Naive thymus-derived CD4-positive, alpha-beta T cell (primary cell): ENCODE measurements at regions of chr2 and their contacts with region 1.

Region 1: GRCh38 chr2:172484253-172484652 is 56.9 kb downstream of the ITGA6 start:
- DNase-seq: peak in 7 of 9 donors; percentile 46 to 68 (median 61)
- ATAC-seq: peak; percentile 66
- H3K4me3 ChIP-seq: no peak overlapping the region
- H3K4me3 Mint-ChIP-seq: peak overlapping the region in 8 of 10 donors; percentile 1 to 81 (median 41)
- H3K27ac ChIP-seq: peak overlapping the region; percentile 16
- H3K27ac Mint-ChIP-seq: peak overlapping the region in 8 of 9 donors; percentile 76 to 94 (median 84)
- H3K4me1 ChIP-seq: peaks cover 0 to 58% of the 10 kb centered on the region in 2 donors
- H3K4me1 Mint-ChIP-seq: peaks cover 27 to 92% (median 77%) of the 10 kb centered on the region in 7 donors
- H3K27me3 ChIP-seq: no peaks in the 10 kb centered on the region
- H3K27me3 Mint-ChIP-seq: no peaks in the 10 kb centered on the region

Region 2: DNA sequence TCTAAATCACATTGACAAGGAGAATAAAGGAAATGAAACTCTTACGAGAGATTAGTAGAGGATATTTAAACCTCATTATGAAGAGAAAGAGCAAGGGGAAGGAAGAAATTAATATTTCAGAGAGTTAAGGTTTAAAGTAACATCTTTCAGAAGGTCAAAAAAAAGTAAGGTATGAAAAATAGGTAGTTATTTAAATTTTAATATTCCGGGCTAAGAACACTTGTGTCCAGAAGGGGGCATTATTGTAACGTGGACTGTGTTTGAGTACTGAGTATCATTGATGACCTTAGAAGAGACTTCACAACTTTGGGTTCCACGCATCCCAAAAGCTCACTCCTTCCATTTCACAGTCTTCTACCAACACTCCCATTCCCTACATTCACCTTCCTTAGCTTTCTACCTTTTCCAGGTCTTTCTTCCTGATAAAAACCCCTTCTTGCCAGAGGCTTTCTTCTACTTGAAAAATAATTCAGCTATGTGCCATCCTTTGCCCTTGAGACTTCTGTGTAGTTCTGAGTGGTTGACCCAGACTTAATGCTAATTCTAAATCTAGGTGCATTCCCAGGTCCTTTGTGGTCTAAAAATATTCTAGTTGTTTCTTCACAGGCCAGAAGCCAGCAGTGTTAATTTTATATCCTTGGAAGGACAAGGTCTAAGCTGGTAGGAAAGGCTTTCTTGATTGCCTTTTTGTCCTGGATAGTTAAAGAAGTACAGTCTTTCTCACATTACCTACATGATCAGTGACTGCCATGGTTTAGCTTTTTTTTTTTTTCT is 780.5 kb before region 1 on chr2:
- CTCF ChIA-PET with region 1: no interaction called
- POLR2A ChIA-PET with region 1: no interaction called
- intact Hi-C with region 1: loop called in 1 of 2 experiments (anchors 1 kb)
- DNase-seq: peak in 5 of 9 donors; percentile 10 to 35 (median 22)
- ATAC-seq: peak; percentile 61
- H3K4me3 ChIP-seq: no peak overlapping the region
- H3K4me3 Mint-ChIP-seq: no peak overlapping the region
- H3K27ac ChIP-seq: no peak overlapping the region
- H3K27ac Mint-ChIP-seq: peak overlapping the region in 6 of 9 donors; percentile 43 to 79 (median 66)
- H3K4me1 ChIP-seq: no peaks in the 10 kb centered on the region
- H3K4me1 Mint-ChIP-seq: peaks cover 2 to 34% (median 11%) of the 10 kb centered on the region in 7 donors
- H3K27me3 ChIP-seq: no peaks in the 10 kb centered on the region
- H3K27me3 Mint-ChIP-seq: no peaks in the 10 kb centered on the region

Region 3: GRCh38 chr2:172120118-172120517 is 364.1 kb before region 1 on chr2:
- CTCF ChIA-PET with region 1: no interaction called
- POLR2A ChIA-PET with region 1: no interaction called
- intact Hi-C with region 1: no loop called
- DNase-seq: no peak
- ATAC-seq: no peak
- H3K4me3 ChIP-seq: no peak overlapping the region
- H3K4me3 Mint-ChIP-seq: no peak overlapping the region
- H3K27ac ChIP-seq: no peak overlapping the region
- H3K27ac Mint-ChIP-seq: no peak overlapping the region
- H3K4me1 ChIP-seq: no peaks in the 10 kb centered on the region
- H3K4me1 Mint-ChIP-seq: no peaks in the 10 kb centered on the region
- H3K27me3 ChIP-seq: no peaks in the 10 kb centered on the region
- H3K27me3 Mint-ChIP-seq: peaks cover 6 to 26% (median 20%) of the 10 kb centered on the region in 5 donors

Region 4: GRCh38 chr2:172172513-172173173 is 311.6 kb before region 1 on chr2:
- CTCF ChIA-PET with region 1: interaction called, 24 read pairs
- POLR2A ChIA-PET with region 1: interaction called, 10 read pairs
- intact Hi-C with region 1: loop called in 1 of 2 experiments (anchors 1 kb)
- DNase-seq: peak; percentile 18 to 74 (median 61)
- ATAC-seq: peak; percentile 97
- H3K4me3 ChIP-seq: peak overlapping the region; percentile 55
- H3K4me3 Mint-ChIP-seq: peak overlapping the region; percentile 69 to 86 (median 79)
- H3K27ac ChIP-seq: peak overlapping the region; percentile 49
- H3K27ac Mint-ChIP-seq: peak overlapping the region in 4 of 9 donors; percentile 12 to 68 (median 47)
- H3K4me1 ChIP-seq: peaks cover 0 to 3% of the 10 kb centered on the region in 2 donors
- H3K4me1 Mint-ChIP-seq: peaks cover 6 to 10% (median 6%) of the 10 kb centered on the region in 7 donors
- H3K27me3 ChIP-seq: no peaks in the 10 kb centered on the region
- H3K27me3 Mint-ChIP-seq: peaks cover 0 to 53% (median 0%) of the 10 kb centered on the region in 5 donors

Region 5: DNA sequence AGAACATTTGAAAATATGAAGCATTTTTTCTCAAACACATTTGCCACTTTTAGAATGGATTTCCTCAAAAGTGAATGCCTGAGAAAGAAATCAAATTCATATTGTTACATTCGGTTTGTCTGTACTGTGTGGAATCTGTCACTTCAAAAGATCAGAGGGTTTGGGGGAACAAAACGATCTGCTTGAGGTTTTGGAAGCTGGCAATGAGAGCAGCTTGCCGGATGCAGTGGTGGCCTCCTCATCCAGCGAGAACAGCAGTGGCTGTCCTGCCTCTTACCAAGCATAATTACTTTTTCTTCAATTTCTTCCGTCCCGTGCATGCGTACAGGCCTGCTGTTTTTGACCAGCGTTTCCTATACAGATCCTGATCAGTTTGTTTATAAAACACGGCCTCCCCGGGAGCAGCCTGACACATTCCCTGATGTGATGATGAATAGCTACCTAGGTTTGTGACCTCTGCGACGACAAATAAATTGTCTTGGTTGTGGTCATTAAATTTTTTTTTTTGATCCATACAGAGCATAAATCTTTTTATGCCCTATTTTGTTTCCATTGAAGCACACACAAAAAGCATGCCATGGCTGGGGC is 11.7 kb before region 1 on chr2:
- CTCF ChIA-PET with region 1: interaction called, 58 read pairs
- POLR2A ChIA-PET with region 1: interaction called, 21 read pairs
- intact Hi-C with region 1: loop called in 1 of 2 experiments (anchors 1 kb)
- DNase-seq: peak in 7 of 9 donors; percentile 44 to 75 (median 60)
- ATAC-seq: peak; percentile 72
- H3K4me3 ChIP-seq: no peak overlapping the region
- H3K4me3 Mint-ChIP-seq: peak overlapping the region; percentile 13 to 84 (median 69)
- H3K27ac ChIP-seq: no peak overlapping the region
- H3K27ac Mint-ChIP-seq: peak overlapping the region in 8 of 9 donors; percentile 72 to 90 (median 81)
- H3K4me1 ChIP-seq: peaks cover 0 to 34% of the 10 kb centered on the region in 2 donors
- H3K4me1 Mint-ChIP-seq: peaks cover 15 to 87% (median 71%) of the 10 kb centered on the region in 7 donors
- H3K27me3 ChIP-seq: no peaks in the 10 kb centered on the region
- H3K27me3 Mint-ChIP-seq: no peaks in the 10 kb centered on the region